ENCODE measurements at regions of chr10 and their contacts with region 1.

Region 1: DNA sequence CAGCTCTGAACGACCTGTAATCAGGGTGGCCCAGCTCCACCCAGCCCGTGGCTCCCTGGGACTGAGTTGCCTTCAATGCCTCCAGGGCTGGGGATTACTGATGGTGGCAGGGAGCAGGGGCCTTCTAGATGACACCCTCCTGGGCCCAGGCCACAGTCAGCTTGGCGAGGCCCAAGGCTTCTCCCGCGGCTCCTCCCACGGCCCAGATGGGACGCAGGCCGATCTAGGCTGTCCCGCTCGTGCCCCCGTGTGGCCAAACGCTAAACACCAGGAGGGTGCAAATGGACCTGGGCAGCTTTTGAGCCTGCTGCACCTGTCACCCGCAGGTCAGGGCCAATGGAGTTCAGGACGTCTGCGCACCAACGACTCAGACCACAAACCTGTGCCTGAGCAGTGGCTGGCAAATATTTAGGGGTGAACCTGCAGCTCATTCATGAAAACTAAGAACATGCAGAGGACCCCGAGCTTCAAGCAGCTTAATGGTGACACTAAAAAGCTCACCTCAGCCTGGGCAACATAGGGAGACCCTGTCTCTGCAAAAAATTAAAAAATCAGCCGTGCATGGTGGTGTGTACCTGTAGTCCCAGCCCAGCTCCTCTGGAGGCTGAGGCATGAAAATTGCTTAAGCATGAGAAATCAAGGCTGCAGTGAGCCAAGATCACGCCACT is 43.2 kb downstream of the ASB13 start:
- DNase-seq: peak; percentile 73 to 98
- H3K4me3 ChIP-seq: no peak overlapping the region
- H3K27ac ChIP-seq: no peak overlapping the region
- H3K4me1 ChIP-seq: no peaks in the 10 kb centered on the region; a peak in 1 of 7 replicates
- H3K27me3 ChIP-seq: no peaks in the 10 kb centered on the region
- CTCF ChIP-seq: peak; percentile 95 to 96 (median 96)
- EP300 ChIP-seq: no peak
- POLR2A ChIP-seq: no peak
- RAD21 ChIP-seq: peak; percentile 97 to 98

Region 2: GRCh38 chr10:5446390-5446926 is 176.8 kb before region 1 on chr10:
- CTCF ChIA-PET with region 1: interaction called, 200 read pairs
- POLR2A ChIA-PET with region 1: interaction called, 10 read pairs
- DNase-seq: peak; percentile 87 to 97
- H3K4me3 ChIP-seq: peak overlapping the region; percentile 19 to 62 (median 46); a peak in 7 of 8 replicates
- H3K27ac ChIP-seq: 0 out of 2 replicates have a peak overlapping the region, but pooled peaks have one; percentile 26
- H3K4me1 ChIP-seq: peaks cover 2 to 3% (median 2%) of the 10 kb centered on the region in 4 experiments; a peak in 4 of 7 replicates
- H3K27me3 ChIP-seq: no peaks in the 10 kb centered on the region
- CTCF ChIP-seq: no peak
- EP300 ChIP-seq: no peak
- POLR2A ChIP-seq: peak; percentile 92 to 93
- RAD21 ChIP-seq: peak; percentile 3 to 42; a peak in 3 of 4 replicates

Region 3: DNA sequence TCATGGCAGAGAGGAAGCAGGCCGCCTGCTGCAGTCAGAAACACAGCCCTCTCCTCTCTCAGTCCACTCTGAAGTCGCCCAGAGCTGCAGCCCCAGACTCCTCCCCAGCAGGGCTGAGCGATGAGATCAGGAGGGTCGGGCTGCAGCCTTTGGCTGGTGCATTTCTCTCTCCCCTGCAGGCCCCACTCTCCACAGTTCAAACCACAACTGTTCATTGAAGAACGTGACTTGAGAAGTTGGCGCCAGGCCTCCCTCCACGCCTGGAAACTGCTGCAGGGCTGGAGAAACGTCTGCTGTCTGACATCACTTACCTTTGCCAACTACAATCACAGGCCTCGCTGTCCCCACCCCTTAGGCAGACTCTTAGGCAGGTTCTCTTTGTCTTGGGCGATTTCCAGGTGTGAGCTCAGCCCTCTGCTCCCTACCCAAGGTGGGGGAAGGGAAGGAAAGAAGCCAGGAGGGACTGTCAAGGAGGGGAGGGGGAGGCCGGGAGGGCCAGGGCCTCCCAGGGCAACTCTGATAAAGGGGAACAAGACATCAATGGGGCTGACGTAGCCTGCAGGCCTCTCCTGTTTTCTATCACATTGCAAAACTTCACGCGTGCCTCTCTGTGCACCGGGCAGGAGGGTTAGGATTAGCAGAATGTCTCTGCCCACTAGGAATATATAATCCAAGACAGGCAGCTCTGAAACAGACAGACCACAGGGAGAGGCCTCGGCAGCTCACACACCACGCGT is 156.6 kb before region 1 on chr10:
- CTCF ChIA-PET with region 1: interaction called, 25 read pairs
- POLR2A ChIA-PET with region 1: no interaction called
- DNase-seq: peak; percentile 71 to 72
- H3K4me3 ChIP-seq: peak overlapping the region in 1 of 4 experiments; percentile 23; a peak in 1 of 8 replicates
- H3K27ac ChIP-seq: peak overlapping the region; percentile 82
- H3K4me1 ChIP-seq: peaks cover 8 to 18% (median 14%) of the 10 kb centered on the region in 4 experiments
- H3K27me3 ChIP-seq: peaks cover 0 to 4% (median 0%) of the 10 kb centered on the region in 4 experiments; a peak in 1 of 7 replicates
- CTCF ChIP-seq: no peak
- EP300 ChIP-seq: no peak
- POLR2A ChIP-seq: peak in 1 of 2 experiments; percentile 53; a peak in 1 of 3 replicates
- RAD21 ChIP-seq: peak; percentile 16 to 29; a peak in 1 of 4 replicates

Region 4: GRCh38 chr10:5502903-5503835 is 120.0 kb before region 1 on chr10:
- CTCF ChIA-PET with region 1: interaction called, 28 read pairs
- POLR2A ChIA-PET with region 1: no interaction called
- DNase-seq: no peak
- H3K4me3 ChIP-seq: no peak overlapping the region
- H3K27ac ChIP-seq: no peak overlapping the region
- H3K4me1 ChIP-seq: no peaks in the 10 kb centered on the region
- H3K27me3 ChIP-seq: no peaks in the 10 kb centered on the region
- CTCF ChIP-seq: no peak
- EP300 ChIP-seq: no peak
- POLR2A ChIP-seq: no peak
- RAD21 ChIP-seq: no peak

Region 5: DNA sequence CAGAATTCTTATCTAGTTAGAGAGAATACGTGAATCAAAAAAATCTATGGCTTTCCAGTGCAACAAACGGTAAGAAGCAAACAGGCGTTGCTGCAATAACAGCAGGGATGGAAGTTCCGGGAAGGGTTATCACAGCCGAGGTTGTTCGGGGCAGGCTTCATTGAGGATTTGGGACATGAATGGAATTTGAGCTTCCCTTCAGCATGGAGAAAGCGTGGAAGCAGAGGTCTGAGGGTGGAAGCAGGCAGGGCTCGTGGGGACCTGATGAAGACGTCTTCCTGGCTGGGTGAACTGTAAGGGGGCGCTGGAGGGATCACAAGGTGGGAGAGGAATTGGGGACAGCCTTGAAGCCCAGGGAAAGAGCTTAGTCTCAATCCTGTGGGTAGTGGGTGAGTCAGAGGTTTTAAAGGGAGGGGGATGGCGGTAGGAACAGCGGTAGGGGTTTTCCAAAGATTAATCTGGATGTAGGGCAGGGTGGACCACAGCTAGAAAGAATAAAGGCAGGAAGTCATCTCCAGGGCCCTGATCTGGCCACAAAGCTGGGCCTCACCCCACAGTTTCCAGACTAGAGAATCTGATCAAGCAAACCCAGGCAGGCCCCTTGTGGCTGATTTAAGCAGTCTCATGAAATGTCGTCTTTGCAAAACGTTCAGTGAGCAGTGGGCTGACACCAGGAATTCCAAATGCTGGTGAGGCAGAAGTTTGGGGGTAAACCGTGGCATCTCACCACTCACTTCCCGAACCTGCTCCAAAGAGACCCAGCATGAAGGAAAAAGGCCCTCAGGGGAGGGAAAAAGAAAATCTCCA is 33.3 kb before region 1 on chr10:
- CTCF ChIA-PET with region 1: interaction called, 27 read pairs
- POLR2A ChIA-PET with region 1: no interaction called
- DNase-seq: no peak
- H3K4me3 ChIP-seq: no peak overlapping the region
- H3K27ac ChIP-seq: no peak overlapping the region
- H3K4me1 ChIP-seq: peaks cover 8 to 24% (median 17%) of the 10 kb centered on the region in 4 experiments
- H3K27me3 ChIP-seq: no peaks in the 10 kb centered on the region; a peak in 1 of 7 replicates
- CTCF ChIP-seq: peak in 1 of 3 experiments; percentile 20; a peak in 1 of 4 replicates
- EP300 ChIP-seq: no peak
- POLR2A ChIP-seq: no peak
- RAD21 ChIP-seq: no peak

Region 6: DNA sequence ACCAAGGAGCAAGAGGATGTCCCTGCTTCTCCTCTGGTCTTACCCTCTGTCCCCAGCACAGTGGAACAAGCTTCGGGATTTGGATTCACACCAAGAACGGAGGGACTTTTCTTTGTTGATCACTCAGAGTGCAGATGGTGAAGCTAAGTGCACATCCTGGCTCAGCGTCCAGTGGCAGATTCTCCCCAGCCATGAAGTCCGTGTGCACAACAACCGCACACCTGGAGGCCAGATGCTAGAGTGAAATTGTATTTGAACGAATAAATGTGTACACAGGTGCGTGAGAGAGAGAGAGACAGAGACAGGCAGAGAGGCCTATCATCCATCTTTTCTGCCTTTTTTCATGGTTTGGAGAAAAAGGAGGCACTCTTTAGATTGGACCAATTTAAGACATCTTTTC is 11.7 kb after region 1 on chr10:
- CTCF ChIA-PET with region 1: interaction called, 15 read pairs
- POLR2A ChIA-PET with region 1: no interaction called
- DNase-seq: no peak
- H3K4me3 ChIP-seq: no peak overlapping the region
- H3K27ac ChIP-seq: no peak overlapping the region
- H3K4me1 ChIP-seq: peaks cover 0 to 5% (median 0%) of the 10 kb centered on the region in 4 experiments; a peak in 1 of 7 replicates
- H3K27me3 ChIP-seq: no peaks in the 10 kb centered on the region
- CTCF ChIP-seq: no peak
- EP300 ChIP-seq: no peak
- POLR2A ChIP-seq: no peak
- RAD21 ChIP-seq: no peak

Region 7: GRCh38 chr10:5895804-5896203 is 272.6 kb after region 1 on chr10:
- CTCF ChIA-PET with region 1: no interaction called
- POLR2A ChIA-PET with region 1: no interaction called
- DNase-seq: no peak
- H3K4me3 ChIP-seq: no peak overlapping the region
- H3K27ac ChIP-seq: no peak overlapping the region
- H3K4me1 ChIP-seq: peaks cover 0 to 5% (median 3%) of the 10 kb centered on the region in 4 experiments; a peak in 3 of 7 replicates
- H3K27me3 ChIP-seq: no peaks in the 10 kb centered on the region; a peak in 1 of 7 replicates
- CTCF ChIP-seq: no peak
- EP300 ChIP-seq: no peak
- POLR2A ChIP-seq: no peak
- RAD21 ChIP-seq: no peak

Measured in H1 (cell line).